Activated CD4-positive, alpha-beta T cell treated with anti-CD3 and anti-CD28 coated beads, Interleukin-2, amount 10 ng/mL, durations not matched to agents 7 days and 5 days (primary cell): ENCODE measurements at regions of chr1 and their contacts with region 1.

Region 1: DNA sequence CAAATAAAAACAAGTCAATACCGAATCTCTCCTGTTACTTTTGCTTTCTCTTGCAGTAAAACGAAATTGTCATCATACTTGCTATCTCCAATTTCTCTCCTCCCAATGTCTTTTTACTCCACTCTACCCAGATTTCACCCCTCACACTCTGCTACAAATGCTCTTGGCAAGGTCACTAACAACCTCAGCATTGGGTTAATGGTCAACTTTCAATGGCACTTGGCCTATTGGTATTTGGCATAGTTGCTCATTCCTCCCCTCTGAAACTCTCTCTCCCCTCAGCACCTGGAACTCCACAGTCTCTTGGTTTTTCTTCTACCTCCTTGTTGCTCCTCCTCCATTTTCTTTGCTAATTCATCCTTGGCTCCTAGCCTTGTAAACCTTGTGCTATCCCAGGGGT is 367.3 kb downstream of the PTPRU start:
- DNase-seq: no peak
- H3K4me3 Mint-ChIP-seq: no peak overlapping the region
- H3K27ac Mint-ChIP-seq: no peak overlapping the region
- H3K4me1 Mint-ChIP-seq: no peaks in the 10 kb centered on the region
- H3K27me3 Mint-ChIP-seq: peaks cover 3% of the 10 kb centered on the region

Region 2: DNA sequence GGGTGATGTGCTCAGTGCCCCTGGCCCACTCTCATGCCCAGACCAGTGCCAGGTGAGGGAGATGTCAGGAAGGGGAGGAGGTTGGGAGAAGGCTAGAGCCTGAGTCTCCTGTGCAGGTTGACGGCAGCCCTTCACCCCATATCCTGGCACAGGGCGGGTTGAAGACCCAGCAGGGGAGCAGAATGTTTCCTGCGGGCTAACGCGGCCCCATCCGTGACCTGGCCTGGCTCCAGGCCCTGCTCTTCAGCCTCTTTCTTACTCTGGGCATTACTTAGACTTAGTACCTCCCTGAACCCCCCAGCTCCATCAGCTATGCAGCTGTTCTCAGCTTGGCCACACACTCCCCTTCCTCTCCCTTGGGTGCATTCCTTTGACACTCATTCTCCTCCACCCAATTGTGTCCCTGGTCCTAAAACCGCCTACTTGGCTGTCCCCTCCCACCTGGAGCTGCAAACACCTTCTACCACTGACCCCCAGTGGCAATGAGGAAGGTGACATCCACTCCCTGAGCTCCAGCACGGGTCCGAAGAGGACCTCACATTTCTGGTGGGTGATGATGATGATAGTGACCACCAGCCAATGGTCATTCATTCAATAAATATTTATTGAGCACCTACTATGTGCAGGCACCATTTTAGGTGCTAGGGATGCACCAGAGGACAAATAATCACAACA is 188.3 kb before region 1 on chr1:
- CTCF ChIA-PET with region 1: no interaction called
- POLR2A ChIA-PET with region 1: interaction called, 11 read pairs
- DNase-seq: no peak
- H3K4me3 Mint-ChIP-seq: no peak overlapping the region
- H3K27ac Mint-ChIP-seq: no peak overlapping the region
- H3K4me1 Mint-ChIP-seq: no peaks in the 10 kb centered on the region
- H3K27me3 Mint-ChIP-seq: peaks cover 2% of the 10 kb centered on the region

Region 3: DNA sequence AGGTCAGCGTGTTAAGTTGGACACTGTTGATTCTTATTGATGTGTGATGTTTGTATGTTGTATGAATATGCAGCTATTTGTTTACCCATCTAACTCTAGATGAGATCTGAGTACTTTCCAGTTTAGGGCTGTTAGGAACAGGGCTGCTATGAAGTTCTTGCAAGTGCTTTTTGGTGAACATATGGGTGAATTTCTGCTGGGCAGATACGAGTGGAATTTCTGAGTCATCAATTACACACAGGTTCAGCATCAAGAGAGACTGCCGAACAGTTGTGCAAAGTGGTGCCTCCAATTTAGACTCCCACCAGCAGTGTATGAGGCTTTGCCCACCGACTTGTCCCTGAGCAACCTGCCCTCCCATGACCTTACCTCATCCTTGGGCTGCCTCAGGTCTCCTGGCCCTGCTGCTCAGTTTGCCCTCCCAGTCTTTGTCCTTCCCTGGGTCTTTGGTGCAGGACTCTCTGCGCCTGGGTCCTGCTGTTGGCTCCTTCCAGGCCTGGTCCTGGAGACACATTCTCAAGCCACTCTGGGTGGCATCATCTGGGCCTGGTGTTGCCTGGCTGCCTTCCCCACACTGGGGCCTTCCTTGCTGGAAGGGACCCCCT is 23.7 kb before region 1 on chr1:
- CTCF ChIA-PET with region 1: no interaction called
- POLR2A ChIA-PET with region 1: no interaction called
- DNase-seq: no peak
- H3K4me3 Mint-ChIP-seq: no peak overlapping the region
- H3K27ac Mint-ChIP-seq: no peak overlapping the region
- H3K4me1 Mint-ChIP-seq: no peaks in the 10 kb centered on the region
- H3K27me3 Mint-ChIP-seq: no peaks in the 10 kb centered on the region

Region 4: DNA sequence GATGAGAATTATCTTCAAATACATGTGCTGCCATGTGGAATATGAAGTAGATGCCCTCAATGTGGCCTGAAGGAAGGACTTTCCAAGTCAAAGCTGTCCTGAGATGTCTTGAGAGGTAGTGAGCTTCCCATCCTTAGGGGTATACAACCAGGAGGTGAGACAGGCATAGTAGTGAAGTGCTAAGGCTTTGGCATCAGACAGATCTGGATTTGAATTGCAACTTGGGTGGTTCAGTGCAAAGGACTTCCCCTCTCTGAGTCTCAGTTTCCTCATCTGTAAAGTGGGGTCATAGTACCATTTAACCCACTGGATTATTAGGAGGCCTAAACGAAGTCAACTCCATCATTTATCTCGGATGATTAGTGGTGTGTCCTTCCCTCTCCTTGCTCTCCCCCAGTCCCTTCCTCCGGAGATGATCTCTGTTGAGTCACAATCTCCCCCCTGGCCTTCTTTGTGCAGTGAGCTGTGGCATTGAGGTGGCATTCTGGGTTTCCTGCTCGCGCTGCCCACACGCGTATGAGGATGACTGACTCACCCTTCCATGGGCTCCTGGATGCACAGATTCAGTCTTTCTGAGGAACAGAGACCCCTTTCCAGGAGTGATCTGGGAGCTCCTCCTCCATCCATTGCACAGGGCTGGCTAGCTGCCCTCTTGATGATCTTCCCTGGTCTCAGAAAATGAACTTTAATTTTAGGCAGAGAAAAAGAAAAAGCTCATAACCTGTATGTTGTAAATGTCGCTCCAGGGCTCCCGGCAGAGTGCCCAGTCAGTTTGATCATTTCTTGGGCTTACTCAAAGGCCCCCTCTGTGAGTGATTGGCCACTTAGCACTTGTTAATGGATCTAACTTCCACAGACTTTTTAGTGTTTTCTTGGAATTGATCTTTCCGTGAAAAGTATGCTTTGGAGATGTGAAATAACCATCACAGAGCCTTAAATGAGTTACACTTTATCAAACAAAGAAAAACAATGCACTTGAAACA is 12.7 kb before region 1 on chr1:
- CTCF ChIA-PET with region 1: no interaction called
- POLR2A ChIA-PET with region 1: no interaction called
- DNase-seq: no peak
- H3K4me3 Mint-ChIP-seq: no peak overlapping the region
- H3K27ac Mint-ChIP-seq: no peak overlapping the region
- H3K4me1 Mint-ChIP-seq: no peaks in the 10 kb centered on the region
- H3K27me3 Mint-ChIP-seq: peaks cover 5% of the 10 kb centered on the region

Region 5: DNA sequence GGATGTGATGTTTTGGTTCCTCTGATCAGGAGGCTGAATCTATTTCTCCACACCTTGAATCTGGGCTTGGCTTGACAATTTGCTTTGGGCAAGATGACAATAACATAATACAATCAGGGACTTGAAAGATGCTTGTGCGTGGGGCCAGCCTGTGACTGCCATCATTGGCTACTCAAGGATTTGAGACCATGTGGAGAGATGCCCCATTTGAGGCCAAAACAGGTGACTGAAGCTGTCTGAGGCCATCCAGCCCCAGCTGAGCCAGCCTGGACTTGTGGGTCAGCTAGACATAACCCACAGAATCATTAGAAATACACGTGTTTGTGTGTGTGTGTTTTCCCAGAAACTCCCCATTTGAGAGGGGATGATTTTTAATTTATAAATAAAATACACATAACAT is 54.2 kb after region 1 on chr1:
- CTCF ChIA-PET with region 1: no interaction called
- POLR2A ChIA-PET with region 1: no interaction called
- DNase-seq: no peak
- H3K4me3 Mint-ChIP-seq: no peak overlapping the region
- H3K27ac Mint-ChIP-seq: no peak overlapping the region
- H3K4me1 Mint-ChIP-seq: no peaks in the 10 kb centered on the region
- H3K27me3 Mint-ChIP-seq: peaks cover 8% of the 10 kb centered on the region